Right ventricle myocardium inferior (tissue), 1 donor: ENCODE measurements at regions of chr5 and their contacts with region 1.

Region 1: GRCh38 chr5:136087961-136088871 is 44.4 kb upstream of the SMAD5 start:
- DNase-seq: peak; percentile 87
- ATAC-seq: peak; percentile 92

Region 2: DNA sequence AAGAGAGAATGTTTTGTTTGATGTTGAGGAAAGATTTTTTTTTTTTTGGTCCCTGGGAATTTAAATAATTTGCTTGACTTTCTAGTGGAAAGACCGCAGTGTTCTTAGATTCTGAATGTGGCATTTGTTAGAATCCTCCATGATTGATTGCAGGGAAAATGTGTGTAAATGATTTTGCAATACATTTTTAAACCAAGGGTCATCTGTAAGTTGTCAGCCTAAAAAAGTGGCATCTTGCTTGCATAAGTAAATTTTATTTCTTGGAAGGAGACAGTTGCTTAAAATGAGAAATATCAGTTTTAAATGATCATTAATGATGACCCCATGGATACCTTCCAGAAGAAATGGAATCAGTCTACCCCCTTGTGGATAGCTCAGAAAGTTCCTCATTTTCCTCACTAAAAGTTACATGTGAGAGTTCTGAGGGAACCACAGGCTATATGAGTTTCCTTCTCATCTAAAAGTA is 358.9 kb before region 1 on chr5:
- intact Hi-C with region 1: no loop called
- DNase-seq: no peak
- ATAC-seq: no peak

Region 3: GRCh38 chr5:136018814-136019783 is 69.1 kb before region 1 on chr5:
- intact Hi-C with region 1: no loop called
- DNase-seq: no peak
- ATAC-seq: peak; percentile 73

Region 4: GRCh38 chr5:136058039-136058952 is 29.9 kb before region 1 on chr5:
- intact Hi-C with region 1: no loop called
- DNase-seq: no peak
- ATAC-seq: peak; percentile 80

Region 5: GRCh38 chr5:136132557-136133221 is 44.5 kb after region 1 on chr5 and contains the start of gene SMAD5:
- intact Hi-C with region 1: loop called (anchors 2 kb)
- DNase-seq: peak; percentile 97
- ATAC-seq: peak; percentile 99
- total RNA-seq, gene SMAD5: 42.0 TPM

Region 6: GRCh38 chr5:136174021-136174659 is 85.9 kb after region 1 on chr5:
- intact Hi-C with region 1: loop called (anchors 2 kb)
- DNase-seq: no peak
- ATAC-seq: no peak